Endothelial cell of umbilical vein (primary cell): ENCODE measurements at regions of chr3 and their contacts with region 1.

Region 1: GRCh38 chr3:141000027-141000663 is 51.0 kb upstream of the SPSB4 start:
- DNase-seq: peak; percentile 51
- H3K4me3 ChIP-seq: no peak overlapping the region
- H3K27ac ChIP-seq: no peak overlapping the region
- H3K4me1 ChIP-seq: no peaks in the 10 kb centered on the region
- H3K27me3 ChIP-seq: peaks cover 0 to 3% of the 10 kb centered on the region in 2 experiments
- CTCF ChIP-seq: peak; percentile 47 to 68
- POLR2A ChIP-seq: no peak

Region 2: GRCh38 chr3:141011232-141011996 is 11.3 kb after region 1 on chr3:
- CTCF ChIA-PET with region 1: interaction called, 36 read pairs
- POLR2A ChIA-PET with region 1: no interaction called
- dilution Hi-C with region 1: no loop called
- intact Hi-C with region 1: no loop called
- DNase-seq: peak; percentile 59
- H3K4me3 ChIP-seq: no peak overlapping the region
- H3K27ac ChIP-seq: no peak overlapping the region
- H3K4me1 ChIP-seq: no peaks in the 10 kb centered on the region
- H3K27me3 ChIP-seq: peaks cover 4 to 9% of the 10 kb centered on the region in 2 experiments
- CTCF ChIP-seq: peak; percentile 70 to 88
- POLR2A ChIP-seq: no peak

Region 3: GRCh38 chr3:141114816-141115460 is 114.8 kb after region 1 on chr3:
- CTCF ChIA-PET with region 1: interaction called, 10 read pairs
- POLR2A ChIA-PET with region 1: no interaction called
- dilution Hi-C with region 1: no loop called
- intact Hi-C with region 1: no loop called
- DNase-seq: no peak
- H3K4me3 ChIP-seq: no peak overlapping the region
- H3K27ac ChIP-seq: no peak overlapping the region
- H3K4me1 ChIP-seq: no peaks in the 10 kb centered on the region
- H3K27me3 ChIP-seq: no peaks in the 10 kb centered on the region
- CTCF ChIP-seq: peak; percentile 22 to 24
- POLR2A ChIP-seq: no peak

Region 4: DNA sequence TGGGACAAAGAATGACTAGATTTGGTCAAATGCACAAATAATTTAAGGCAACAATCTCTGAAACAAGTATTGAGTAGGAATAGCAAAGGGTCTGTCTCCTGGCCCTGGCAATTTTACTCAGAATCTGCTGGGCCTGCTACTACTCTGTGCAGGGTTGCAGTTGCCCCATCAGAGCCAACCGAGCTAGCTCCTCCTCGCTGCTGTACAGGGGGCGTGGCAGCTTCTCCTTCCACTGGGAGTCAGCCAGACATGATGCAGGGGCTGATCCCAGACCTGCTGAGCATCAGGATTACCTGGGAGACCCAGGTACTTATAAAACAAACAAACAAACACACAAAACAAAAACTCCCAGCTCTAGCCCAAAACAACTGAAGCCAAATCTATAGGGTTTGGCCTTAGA is 201.0 kb after region 1 on chr3:
- CTCF ChIA-PET with region 1: no interaction called
- POLR2A ChIA-PET with region 1: no interaction called
- dilution Hi-C with region 1: no loop called
- intact Hi-C with region 1: no loop called
- DNase-seq: no peak
- H3K4me3 ChIP-seq: no peak overlapping the region
- H3K27ac ChIP-seq: no peak overlapping the region
- H3K4me1 ChIP-seq: no peaks in the 10 kb centered on the region
- H3K27me3 ChIP-seq: peaks cover 2 to 8% of the 10 kb centered on the region in 2 experiments
- CTCF ChIP-seq: no peak
- POLR2A ChIP-seq: no peak

Region 5: DNA sequence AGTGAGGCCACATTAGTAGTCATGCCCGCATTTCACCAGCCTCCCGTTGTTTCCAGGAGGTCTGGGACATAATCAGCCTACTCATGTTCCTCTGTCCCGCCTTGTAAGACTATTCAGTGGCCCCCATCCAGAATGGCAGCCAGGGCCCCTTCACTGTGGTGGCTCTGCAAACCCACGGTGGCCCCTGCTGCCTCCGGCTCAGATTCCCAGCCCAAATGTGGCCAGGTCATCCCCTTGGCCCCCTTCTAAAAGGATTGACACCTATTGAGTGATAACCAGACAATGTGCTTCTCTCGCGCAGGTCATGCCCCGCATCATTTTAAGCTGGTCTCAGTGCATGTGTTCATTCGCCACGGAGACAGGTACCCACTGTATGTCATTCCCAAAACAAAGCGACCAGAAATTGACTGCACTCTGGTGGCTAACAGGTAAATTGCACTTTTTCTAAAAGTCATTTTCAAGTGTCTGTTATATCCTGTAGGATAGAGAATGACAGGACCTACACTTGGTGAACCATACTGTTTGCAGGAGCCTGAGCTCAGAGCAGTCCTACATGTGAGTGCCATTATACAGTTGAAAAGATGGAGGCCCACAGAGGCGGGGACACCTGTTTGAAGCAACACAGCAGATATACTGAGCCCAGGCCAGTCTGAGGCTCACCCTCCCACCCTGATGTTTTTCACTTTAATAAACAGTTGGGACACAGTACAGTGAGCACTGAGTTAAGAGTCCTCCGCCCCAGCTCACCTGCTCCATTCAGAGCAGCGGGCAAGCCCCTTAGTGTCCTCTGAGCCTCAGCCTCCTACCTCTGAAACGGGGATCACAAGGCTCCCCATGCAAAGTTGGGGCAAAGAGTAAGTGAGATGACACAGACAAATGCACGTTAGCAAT is 279.2 kb after region 1 on chr3:
- CTCF ChIA-PET with region 1: no interaction called
- POLR2A ChIA-PET with region 1: no interaction called
- dilution Hi-C with region 1: no loop called
- intact Hi-C with region 1: loop called (anchors 2 kb)
- DNase-seq: no peak
- H3K4me3 ChIP-seq: no peak overlapping the region
- H3K27ac ChIP-seq: no peak overlapping the region
- H3K4me1 ChIP-seq: peaks cover 5% of the 10 kb centered on the region
- H3K27me3 ChIP-seq: no peaks in the 10 kb centered on the region
- CTCF ChIP-seq: peak; percentile 22 to 39
- POLR2A ChIP-seq: no peak